ENCODE measurements at regions of chr11 and their contacts with region 1.

Region 1: GRCh38 chr11:111926505-111927391 is 8.0 kb downstream of the C11orf52 start:
- DNase-seq: peak; percentile 98
- H3K4me3 ChIP-seq: peak overlapping the region; percentile 41
- H3K27ac ChIP-seq: peak overlapping the region; percentile 67
- H3K4me1 ChIP-seq: peaks cover 34% of the 10 kb centered on the region
- H3K27me3 ChIP-seq: no peaks in the 10 kb centered on the region
- CTCF ChIP-seq: no peak

Region 2: DNA sequence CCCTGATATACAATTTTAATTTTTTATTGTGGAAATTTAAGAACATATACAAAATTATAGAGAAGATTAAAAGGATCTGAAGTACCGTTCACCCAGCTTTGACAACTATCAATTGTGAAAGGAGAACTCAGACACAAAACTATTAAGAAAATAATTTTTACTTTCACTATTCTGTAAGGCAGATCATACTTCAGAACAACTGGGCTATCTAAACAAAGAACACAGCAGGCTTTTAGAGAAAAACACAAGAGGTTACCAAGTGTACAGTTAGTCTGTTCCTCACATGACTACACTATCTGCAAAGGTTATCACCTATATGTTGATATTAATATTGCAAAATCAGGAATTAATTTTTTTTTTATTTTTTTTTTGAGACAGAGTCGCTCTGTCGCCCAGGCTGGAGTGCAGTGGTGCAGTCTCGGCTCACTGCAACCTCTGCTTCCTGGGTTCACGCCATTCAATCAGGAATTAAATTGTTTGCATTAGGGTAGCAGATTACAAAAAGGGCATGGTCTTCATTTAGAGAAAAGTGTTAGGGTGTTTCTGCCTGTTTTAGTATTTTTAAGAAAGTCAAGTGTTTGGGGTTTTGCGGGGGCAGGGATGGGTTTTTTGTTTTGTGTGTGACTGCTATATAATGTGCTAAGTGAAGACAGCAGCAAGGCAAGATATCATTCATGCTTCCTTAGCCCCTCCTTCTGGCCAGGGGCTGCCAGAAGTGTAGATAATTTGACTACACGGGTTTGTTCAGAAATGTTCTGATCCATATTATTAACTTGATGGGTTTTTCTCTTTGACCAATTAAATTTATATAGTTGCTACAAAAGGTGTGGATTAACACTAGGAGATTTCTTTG is 352.1 kb before region 1 on chr11:
- CTCF ChIA-PET with region 1: no interaction called
- POLR2A ChIA-PET with region 1: no interaction called
- intact Hi-C with region 1: no loop called
- DNase-seq: no peak
- H3K4me3 ChIP-seq: no peak overlapping the region
- H3K27ac ChIP-seq: no peak overlapping the region
- H3K4me1 ChIP-seq: peaks cover 8% of the 10 kb centered on the region
- H3K27me3 ChIP-seq: no peaks in the 10 kb centered on the region
- CTCF ChIP-seq: 0 out of 2 replicates have a peak, but pooled peaks have one; percentile 30

Region 3: GRCh38 chr11:111957663-111958444 is 31.1 kb after region 1 on chr11:
- CTCF ChIA-PET with region 1: no interaction called
- POLR2A ChIA-PET with region 1: interaction called, 14 read pairs
- intact Hi-C with region 1: no loop called
- DNase-seq: no peak
- H3K4me3 ChIP-seq: no peak overlapping the region
- H3K27ac ChIP-seq: no peak overlapping the region
- H3K4me1 ChIP-seq: no peaks in the 10 kb centered on the region
- H3K27me3 ChIP-seq: no peaks in the 10 kb centered on the region
- CTCF ChIP-seq: no peak

Region 4: GRCh38 chr11:112024773-112025678 is 98.3 kb after region 1 on chr11 and contains the start of gene DLAT:
- CTCF ChIA-PET with region 1: no interaction called
- POLR2A ChIA-PET with region 1: no interaction called
- intact Hi-C with region 1: loop called (anchors 2 kb)
- DNase-seq: peak; percentile 95
- H3K4me3 ChIP-seq: peak within 1 kb of the TSS; percentile 77
- H3K27ac ChIP-seq: peak within 1 kb of the TSS; percentile 88
- H3K4me1 ChIP-seq: peaks cover 13% of the 10 kb centered on the region
- H3K27me3 ChIP-seq: no peaks in the 10 kb centered on the region
- CTCF ChIP-seq: no peak
- total RNA-seq, gene DLAT: 90.8 and 94.1 TPM in 2 replicates

Region 5: GRCh38 chr11:112074026-112074811 is 147.5 kb after region 1 on chr11 and contains the start of gene NKAPD1:
- CTCF ChIA-PET with region 1: interaction called, 11 read pairs
- POLR2A ChIA-PET with region 1: no interaction called
- intact Hi-C with region 1: no loop called
- DNase-seq: peak; percentile 96
- H3K4me3 ChIP-seq: peak within 1 kb of the TSS; percentile 93
- H3K27ac ChIP-seq: peak within 1 kb of the TSS; percentile 98
- H3K4me1 ChIP-seq: peaks cover 11% of the 10 kb centered on the region
- H3K27me3 ChIP-seq: no peaks in the 10 kb centered on the region
- CTCF ChIP-seq: 0 out of 2 replicates have a peak, but pooled peaks have one; percentile 16
- total RNA-seq, gene NKAPD1: 30.4 and 32.8 TPM in 2 replicates